Caco-2 (cell line): ENCODE measurements at regions of chr1 and their contacts with region 1.

Region 1: GRCh38 chr1:172630056-172630818 is 28.7 kb upstream of the FASLG start:
- DNase-seq: no peak
- H3K4me3 ChIP-seq: no peak overlapping the region
- H3K4me3 Mint-ChIP-seq: peak overlapping the region; percentile 27
- H3K27ac Mint-ChIP-seq: peak overlapping the region; percentile 89
- H3K4me1 ChIP-seq: peaks cover 60% of the 10 kb centered on the region
- H3K4me1 Mint-ChIP-seq: peaks cover 28% of the 10 kb centered on the region
- H3K27me3 ChIP-seq: no peaks in the 10 kb centered on the region
- H3K27me3 Mint-ChIP-seq: no peaks in the 10 kb centered on the region
- CTCF ChIP-seq: no peak

Region 2: GRCh38 chr1:172674831-172675613 is 44.8 kb after region 1 on chr1:
- CTCF ChIA-PET with region 1: no interaction called
- POLR2A ChIA-PET with region 1: no interaction called
- intact Hi-C with region 1: loop called (anchors 5 kb)
- DNase-seq: no peak
- H3K4me3 ChIP-seq: no peak overlapping the region
- H3K4me3 Mint-ChIP-seq: no peak overlapping the region
- H3K27ac Mint-ChIP-seq: no peak overlapping the region
- H3K4me1 ChIP-seq: peaks cover 21% of the 10 kb centered on the region; the same call in 1 of the 2 replicates
- H3K4me1 Mint-ChIP-seq: peaks cover 7% of the 10 kb centered on the region
- H3K27me3 ChIP-seq: no peaks in the 10 kb centered on the region
- H3K27me3 Mint-ChIP-seq: no peaks in the 10 kb centered on the region
- CTCF ChIP-seq: no peak

Region 3: GRCh38 chr1:172719694-172720138 is 89.5 kb after region 1 on chr1:
- CTCF ChIA-PET with region 1: no interaction called
- POLR2A ChIA-PET with region 1: no interaction called
- intact Hi-C with region 1: loop called (anchors 5 kb)
- DNase-seq: peak in 1 of 2 experiments; percentile 60
- H3K4me3 ChIP-seq: no peak overlapping the region
- H3K4me3 Mint-ChIP-seq: no peak overlapping the region
- H3K27ac Mint-ChIP-seq: no peak overlapping the region
- H3K4me1 ChIP-seq: peaks cover 7% of the 10 kb centered on the region; the same call in 1 of the 2 replicates
- H3K4me1 Mint-ChIP-seq: peaks cover 20% of the 10 kb centered on the region
- H3K27me3 ChIP-seq: no peaks in the 10 kb centered on the region
- H3K27me3 Mint-ChIP-seq: no peaks in the 10 kb centered on the region
- CTCF ChIP-seq: peak; percentile 74 to 77

Region 4: DNA sequence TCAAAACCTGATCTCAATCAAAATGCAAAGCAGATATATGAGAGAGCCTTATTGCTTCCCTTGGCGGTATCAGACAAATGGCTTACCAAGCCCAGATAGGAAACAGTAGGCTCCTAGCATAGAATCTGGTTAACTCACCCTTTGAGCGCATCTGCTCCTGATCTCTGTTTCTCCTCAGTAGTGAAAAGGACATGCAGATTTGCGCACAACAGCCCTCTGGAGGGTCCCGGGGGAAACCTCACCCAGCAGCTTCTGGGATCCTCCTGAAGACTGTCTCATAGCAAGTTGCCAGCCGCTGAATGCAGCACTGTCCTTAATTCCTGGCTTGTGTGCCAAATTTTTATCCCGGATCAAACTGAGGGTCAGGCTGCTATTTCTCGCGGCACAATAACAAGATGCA is 220.8 kb after region 1 on chr1:
- CTCF ChIA-PET with region 1: no interaction called
- POLR2A ChIA-PET with region 1: no interaction called
- intact Hi-C with region 1: no loop called
- DNase-seq: no peak
- H3K4me3 ChIP-seq: no peak overlapping the region
- H3K4me3 Mint-ChIP-seq: no peak overlapping the region
- H3K27ac Mint-ChIP-seq: no peak overlapping the region
- H3K4me1 ChIP-seq: peaks cover 19% of the 10 kb centered on the region; the same call in 1 of the 2 replicates
- H3K4me1 Mint-ChIP-seq: no peaks in the 10 kb centered on the region
- H3K27me3 ChIP-seq: no peaks in the 10 kb centered on the region
- H3K27me3 Mint-ChIP-seq: no peaks in the 10 kb centered on the region
- CTCF ChIP-seq: no peak

Region 5: DNA sequence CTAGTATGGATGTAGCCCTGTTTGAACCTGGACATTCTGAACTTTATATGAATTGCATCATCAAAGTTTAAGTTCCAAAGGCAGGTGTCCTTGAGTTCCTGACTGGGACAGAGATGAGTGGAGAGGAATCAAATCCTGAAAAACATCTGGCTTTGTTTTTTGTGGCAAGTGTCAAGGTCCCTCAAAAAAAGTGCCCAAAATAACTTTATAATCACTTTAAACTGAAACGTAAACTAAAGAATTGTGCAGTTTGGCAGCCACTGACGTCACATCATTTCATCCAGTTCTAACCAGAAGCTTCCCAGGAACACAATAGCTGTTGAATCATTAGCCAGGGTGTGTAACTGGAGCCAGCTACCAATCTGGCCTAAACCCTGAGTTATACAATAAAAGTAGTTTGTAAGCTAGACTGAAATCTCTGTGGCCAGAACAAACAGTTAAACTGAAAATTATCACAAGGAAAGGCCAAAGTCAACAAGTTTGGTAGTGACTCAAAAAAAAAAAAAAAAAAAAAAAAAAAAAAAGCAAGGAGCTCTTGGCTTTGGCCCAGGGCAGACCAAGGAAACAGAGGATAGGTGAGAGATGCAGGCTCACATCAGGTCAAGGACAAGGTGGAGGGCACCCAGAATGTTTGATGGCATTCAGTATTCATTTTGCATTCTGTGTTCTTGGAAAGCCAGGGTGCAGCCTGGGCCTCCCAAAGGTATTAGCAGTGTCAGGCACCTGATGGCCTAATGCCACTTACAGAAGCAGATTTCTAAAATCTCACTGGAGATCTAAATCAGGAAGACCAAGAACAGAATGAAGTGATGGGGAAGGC is 346.2 kb after region 1 on chr1:
- CTCF ChIA-PET with region 1: interaction called, 11 read pairs
- POLR2A ChIA-PET with region 1: no interaction called
- intact Hi-C with region 1: no loop called
- DNase-seq: peak; percentile 67 to 71
- H3K4me3 ChIP-seq: no peak overlapping the region
- H3K4me3 Mint-ChIP-seq: peak overlapping the region; percentile 15
- H3K27ac Mint-ChIP-seq: peak overlapping the region; percentile 64
- H3K4me1 ChIP-seq: peaks cover 31% of the 10 kb centered on the region
- H3K4me1 Mint-ChIP-seq: peaks cover 35% of the 10 kb centered on the region
- H3K27me3 ChIP-seq: no peaks in the 10 kb centered on the region
- H3K27me3 Mint-ChIP-seq: no peaks in the 10 kb centered on the region
- CTCF ChIP-seq: no peak